HEK293T (cell line): ENCODE measurements at regions of chr15 and their contacts with region 1.

Region 1: DNA sequence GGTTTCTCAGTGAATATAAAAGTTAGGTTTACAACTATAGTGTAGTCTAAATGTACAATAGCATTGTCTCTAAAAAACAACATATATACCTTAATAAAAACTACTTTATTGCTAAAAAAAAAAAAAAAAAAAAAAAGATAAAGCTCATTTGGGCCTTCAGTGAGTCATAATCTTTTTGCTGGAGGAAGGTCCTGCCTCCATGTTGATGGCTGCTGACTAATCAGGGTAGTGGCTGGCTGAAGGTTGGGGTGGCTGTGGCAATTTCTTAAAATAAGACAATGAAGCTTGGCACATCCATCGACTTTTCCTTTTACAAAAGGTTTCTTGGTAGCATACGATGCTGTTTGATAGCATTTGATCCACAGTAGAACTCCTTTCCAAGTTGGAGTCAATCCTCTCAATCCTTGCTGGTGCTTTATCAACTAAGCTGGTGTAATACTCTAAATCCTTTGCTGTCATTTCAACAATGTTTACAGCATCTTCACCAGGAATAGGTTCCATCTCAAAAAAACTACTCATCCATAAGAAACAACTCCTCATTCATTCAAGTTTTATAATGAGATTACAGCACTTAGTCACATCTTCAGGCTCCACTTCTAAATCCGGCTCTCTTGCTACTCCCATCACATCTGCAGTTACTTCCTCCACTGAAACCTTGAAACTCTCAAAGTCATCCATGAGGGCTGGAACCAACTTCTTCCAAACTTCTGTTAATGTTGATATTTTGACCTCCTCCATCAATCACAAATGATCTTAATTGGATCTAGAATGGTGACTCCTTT is 13.3 kb downstream of the ZNF280D start:
- DNase-seq: no peak

Region 2: DNA sequence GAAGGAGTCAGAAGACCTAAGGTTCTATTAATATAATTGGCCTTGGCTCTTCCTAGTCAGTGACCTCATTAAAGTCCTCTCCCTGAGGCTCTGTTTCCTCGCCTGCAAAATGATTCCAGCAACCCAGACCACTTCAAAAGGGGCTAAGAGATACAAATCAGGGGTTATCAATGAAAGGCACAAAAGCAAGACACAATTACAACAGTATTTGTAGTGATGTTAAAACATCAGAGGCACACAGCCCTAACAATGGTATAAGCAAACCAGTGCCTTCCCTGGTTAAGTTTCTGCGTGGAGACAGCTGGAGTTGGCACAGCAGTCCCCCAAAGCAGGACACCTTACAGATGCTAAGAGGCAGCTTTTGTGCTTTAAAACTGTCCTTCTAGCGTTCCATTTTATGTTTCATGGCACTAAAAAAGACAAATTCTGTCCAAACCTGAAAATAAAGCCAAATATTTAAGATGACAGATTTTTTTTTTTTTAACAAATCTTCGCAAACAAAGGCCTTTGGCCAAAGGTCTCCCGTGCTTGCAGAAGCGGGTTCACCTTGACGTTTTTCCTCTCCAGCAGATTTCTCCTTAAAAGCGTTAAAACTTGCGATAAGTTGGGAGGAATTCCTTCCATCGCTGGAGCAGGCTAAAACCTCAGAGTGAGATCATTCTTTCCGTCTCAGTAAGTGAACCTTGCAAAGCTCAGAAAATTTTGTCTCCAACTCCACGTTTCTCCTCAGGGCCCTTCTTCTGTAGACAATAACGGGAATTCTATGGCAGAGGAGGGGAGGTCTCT is 12.4 kb after region 1 on chr15:
- CTCF ChIA-PET with region 1: interaction called, 10 read pairs
- POLR2A ChIA-PET with region 1: interaction called, 3 read pairs
- DNase-seq: no peak

Region 3: GRCh38 chr15:56765251-56765650 is 45.3 kb after region 1 on chr15:
- CTCF ChIA-PET with region 1: no interaction called
- POLR2A ChIA-PET with region 1: no interaction called
- DNase-seq: no peak